ENCODE measurements at regions of chr6 and their contacts with region 1.

Region 1: DNA sequence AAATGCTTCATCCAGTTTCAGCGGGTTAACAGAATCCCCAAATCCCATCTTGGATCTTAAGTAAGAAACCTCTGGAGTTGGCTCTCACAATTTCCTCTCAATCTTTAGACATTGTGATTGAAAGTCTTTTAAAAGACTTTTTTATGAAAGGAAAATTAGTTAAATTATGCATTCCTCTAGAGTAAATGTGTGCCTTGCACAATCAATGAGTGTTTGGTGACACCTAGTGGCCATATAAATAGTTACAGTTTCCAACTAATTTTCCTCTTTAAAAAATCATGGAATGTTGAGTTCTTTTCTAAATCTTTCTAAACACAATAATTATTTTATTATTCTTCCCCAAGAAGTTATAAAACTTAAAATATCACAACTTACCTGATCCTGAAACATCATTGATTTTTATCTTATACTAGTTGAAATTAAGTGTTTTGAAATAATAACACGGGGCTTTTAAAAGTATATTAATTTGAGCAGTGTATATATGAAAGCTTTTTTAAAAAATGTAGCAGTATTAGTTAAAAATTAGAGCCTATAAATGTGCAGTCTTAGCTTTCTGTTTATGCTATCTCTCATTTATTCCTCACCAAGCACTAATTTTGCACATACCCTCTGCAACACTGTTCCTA is 66.4 kb downstream of the PKHD1 start:
- DNase-seq: no peak
- ATAC-seq: no peak
- H3K4me3 Mint-ChIP-seq: no peak overlapping the region
- H3K27ac Mint-ChIP-seq: no peak overlapping the region
- H3K4me1 Mint-ChIP-seq: no peaks in the 10 kb centered on the region
- H3K27me3 Mint-ChIP-seq: peaks cover 4% of the 10 kb centered on the region
- CTCF ChIP-seq: peak; percentile 87

Region 2: DNA sequence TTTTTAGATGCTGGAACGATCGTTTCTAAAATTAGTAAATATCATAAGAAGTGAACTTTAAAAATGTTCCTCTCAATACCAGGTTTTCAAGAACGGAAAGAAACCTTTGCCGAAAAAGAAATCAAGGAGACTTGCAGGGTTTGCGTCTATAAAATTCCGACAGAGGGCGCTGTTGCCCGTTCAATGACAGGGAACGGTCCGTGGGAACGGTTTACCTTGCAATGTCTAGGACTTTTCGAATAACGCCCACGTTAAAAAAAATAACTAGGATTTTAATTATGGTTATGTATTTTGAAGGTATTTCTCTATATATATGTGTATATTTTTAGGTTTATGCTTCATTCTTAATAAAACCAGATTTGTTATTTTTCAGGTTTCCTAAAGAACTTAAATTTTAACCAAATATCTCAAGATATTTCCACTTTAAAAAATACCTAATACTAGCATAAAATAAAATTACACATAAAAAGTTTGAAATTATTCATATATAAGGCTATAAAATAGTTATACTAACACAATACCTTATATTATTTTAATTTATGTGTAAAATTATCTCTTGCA is 1204.9 kb before region 1 on chr6:
- CTCF ChIA-PET with region 1: interaction called, 4 read pairs
- POLR2A ChIA-PET with region 1: no interaction called
- intact Hi-C with region 1: loop called (anchors 10 kb)
- DNase-seq: peak; percentile 76
- ATAC-seq: peak; percentile 34
- H3K4me3 Mint-ChIP-seq: peak overlapping the region; percentile 79
- H3K27ac Mint-ChIP-seq: no peak overlapping the region
- H3K4me1 Mint-ChIP-seq: peaks cover 11% of the 10 kb centered on the region
- H3K27me3 Mint-ChIP-seq: peaks cover 56% of the 10 kb centered on the region
- CTCF ChIP-seq: peak; percentile 81

Region 3: GRCh38 chr6:51855310-51856082 is 165.6 kb before region 1 on chr6:
- CTCF ChIA-PET with region 1: interaction called, 26 read pairs
- POLR2A ChIA-PET with region 1: no interaction called
- intact Hi-C with region 1: loop called (anchors 5 kb)
- DNase-seq: peak; percentile 35
- ATAC-seq: no peak
- H3K4me3 Mint-ChIP-seq: no peak overlapping the region
- H3K27ac Mint-ChIP-seq: no peak overlapping the region
- H3K4me1 Mint-ChIP-seq: no peaks in the 10 kb centered on the region
- H3K27me3 Mint-ChIP-seq: peaks cover 5% of the 10 kb centered on the region
- CTCF ChIP-seq: peak; percentile 74

Region 4: DNA sequence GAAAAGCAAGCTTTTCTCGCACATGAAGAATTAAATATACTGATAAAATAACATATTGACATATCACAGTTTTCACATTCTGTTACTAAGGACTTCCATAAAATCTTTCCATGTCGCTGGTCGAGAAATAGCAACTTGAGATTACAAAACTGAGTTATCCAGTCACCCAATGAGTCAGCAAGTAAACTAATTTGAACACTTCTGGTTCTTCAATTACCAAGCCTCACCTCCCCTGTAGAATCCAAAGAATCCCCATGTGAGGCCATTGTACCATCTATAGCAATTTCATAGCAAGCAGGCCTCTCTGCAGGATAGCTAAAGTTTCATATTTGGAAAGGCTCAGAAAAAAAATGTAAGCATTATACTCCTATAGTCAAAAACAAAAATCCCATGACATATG is 21.0 kb before region 1 on chr6:
- CTCF ChIA-PET with region 1: interaction called, 10 read pairs
- POLR2A ChIA-PET with region 1: no interaction called
- intact Hi-C with region 1: no loop called
- DNase-seq: no peak
- ATAC-seq: no peak
- H3K4me3 Mint-ChIP-seq: no peak overlapping the region
- H3K27ac Mint-ChIP-seq: no peak overlapping the region
- H3K4me1 Mint-ChIP-seq: no peaks in the 10 kb centered on the region
- H3K27me3 Mint-ChIP-seq: peaks cover 10% of the 10 kb centered on the region
- CTCF ChIP-seq: no peak

Region 5: DNA sequence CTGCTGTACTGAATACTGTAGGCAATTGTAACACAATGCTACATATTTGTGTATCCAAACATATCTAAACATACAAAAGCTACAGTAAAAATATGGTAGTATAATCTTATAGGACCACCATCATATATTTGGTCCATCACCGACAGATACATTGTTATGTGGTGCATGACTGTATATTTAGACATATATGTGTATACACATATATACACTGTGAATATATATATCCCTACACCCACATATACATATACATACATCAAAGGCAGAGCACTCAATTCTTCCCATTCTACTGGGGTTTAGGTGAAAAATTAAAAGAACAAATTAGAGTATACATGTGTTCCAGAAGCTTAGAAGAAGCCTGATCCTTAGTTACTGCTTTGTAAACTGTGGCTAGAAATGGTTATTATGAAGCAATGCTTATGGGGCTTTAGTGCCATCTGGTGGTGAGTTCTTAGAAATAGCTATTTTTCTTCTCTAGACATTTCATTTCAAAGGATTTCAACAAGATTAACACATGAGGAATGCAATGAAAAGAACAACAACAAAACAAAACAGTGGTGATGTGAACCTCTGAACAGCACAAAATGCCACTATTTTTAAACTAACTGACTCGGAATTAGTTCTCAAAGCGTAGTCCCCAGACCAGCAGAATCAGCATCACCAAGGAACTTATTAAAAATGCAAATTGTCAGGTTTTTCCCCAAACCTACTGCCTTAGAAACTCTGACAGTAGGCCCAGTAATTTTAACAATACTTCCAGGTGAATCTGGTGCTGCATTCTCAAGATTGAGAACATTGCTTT is 28.4 kb after region 1 on chr6:
- CTCF ChIA-PET with region 1: interaction called, 19 read pairs
- POLR2A ChIA-PET with region 1: no interaction called
- intact Hi-C with region 1: no loop called
- DNase-seq: no peak
- ATAC-seq: peak; percentile 30
- H3K4me3 Mint-ChIP-seq: no peak overlapping the region
- H3K27ac Mint-ChIP-seq: no peak overlapping the region
- H3K4me1 Mint-ChIP-seq: no peaks in the 10 kb centered on the region
- H3K27me3 Mint-ChIP-seq: peaks cover 18% of the 10 kb centered on the region
- CTCF ChIP-seq: peak; percentile 66

Region 6: DNA sequence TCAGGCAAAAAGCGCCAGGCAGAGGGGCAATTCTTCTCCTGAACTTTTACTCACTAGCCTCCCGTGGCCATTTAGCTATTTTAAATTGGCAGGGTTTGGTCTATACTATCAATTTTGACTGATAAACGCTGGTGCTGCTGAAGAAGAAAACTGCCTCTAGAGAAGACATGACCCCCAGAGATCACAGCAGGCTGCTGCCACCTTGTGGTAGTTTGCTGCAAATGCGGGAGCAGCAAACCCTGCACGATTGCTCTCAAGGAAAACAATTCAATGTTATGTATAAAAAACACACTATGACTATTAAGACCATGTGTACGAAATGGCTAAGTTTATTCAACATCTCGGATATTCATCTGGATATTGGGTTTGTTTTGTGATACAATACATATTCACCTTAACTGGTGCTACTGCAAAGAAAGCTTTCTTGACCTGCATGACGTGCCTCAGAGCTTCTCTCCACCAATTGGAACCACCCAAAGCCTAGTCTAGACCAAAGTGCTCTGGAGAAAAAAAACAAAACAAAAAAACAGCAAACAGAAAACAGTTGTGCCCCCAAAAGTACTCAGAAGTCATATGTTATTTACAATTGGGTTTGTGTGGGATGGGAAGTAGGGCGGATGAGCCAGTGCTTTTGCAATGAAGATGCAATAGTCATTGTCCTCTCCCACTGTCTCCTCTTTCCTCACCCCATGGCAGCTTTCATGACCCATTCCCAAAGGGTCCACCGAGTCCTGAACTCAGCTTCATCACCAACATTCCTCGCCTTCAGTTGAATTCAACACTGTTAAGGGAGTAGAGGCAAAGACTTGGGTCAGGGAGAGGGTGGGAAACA is 242.9 kb after region 1 on chr6:
- CTCF ChIA-PET with region 1: no interaction called
- POLR2A ChIA-PET with region 1: no interaction called
- intact Hi-C with region 1: no loop called
- DNase-seq: peak; percentile 78
- ATAC-seq: peak; percentile 83
- H3K4me3 Mint-ChIP-seq: no peak overlapping the region
- H3K27ac Mint-ChIP-seq: peak overlapping the region; percentile 31
- H3K4me1 Mint-ChIP-seq: peaks cover 12% of the 10 kb centered on the region
- H3K27me3 Mint-ChIP-seq: no peaks in the 10 kb centered on the region
- CTCF ChIP-seq: peak; percentile 90

Measured in activated CD8-positive, alpha-beta T cell treated with anti-CD3 and anti-CD28 coated beads for 36 hours (primary cell).